Upper lobe of right lung (tissue), 1 donor: ENCODE measurements at regions of chr19 and their contacts with region 1.

Region 1: GRCh38 chr19:1039646-1040475 is at the start of gene ABCA7:
- DNase-seq: peak; percentile 100
- ATAC-seq: peak; percentile 95
- H3K4me3 ChIP-seq: peak within 1 kb of the TSS; percentile 60
- H3K27ac ChIP-seq: peak within 1 kb of the TSS; percentile 58
- H3K4me1 ChIP-seq: peaks cover 37% of the 10 kb centered on the region
- H3K27me3 ChIP-seq: no peaks in the 10 kb centered on the region
- CTCF ChIP-seq: no peak
- total RNA-seq, gene ABCA7: 51.0 TPM

Region 2: DNA sequence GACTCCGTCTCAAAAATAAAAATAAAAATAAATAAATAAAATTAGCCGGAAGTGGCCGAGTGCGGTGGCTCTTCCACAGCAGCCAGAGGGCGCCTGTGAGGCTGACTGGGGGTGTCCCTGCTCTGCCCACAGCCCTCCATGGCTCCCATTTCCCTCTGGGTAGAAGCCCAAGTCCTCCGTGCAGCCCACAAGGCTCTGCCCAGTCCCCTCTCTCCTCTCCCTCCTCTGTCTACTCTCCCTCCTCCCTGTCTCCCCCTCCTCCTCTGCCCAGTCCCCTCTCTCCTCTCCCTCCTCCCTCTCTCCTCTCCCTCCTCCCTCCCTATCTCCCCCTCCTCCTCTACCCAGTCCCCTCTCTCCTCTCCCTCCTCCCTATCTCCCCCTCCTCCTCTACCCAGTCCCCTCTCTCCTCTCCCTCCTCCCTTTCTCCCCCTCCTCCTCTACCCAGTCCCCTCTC is 268.5 kb before region 1 on chr19:
- intact Hi-C with region 1: no loop called
- DNase-seq: no peak
- ATAC-seq: peak; percentile 65
- H3K4me3 ChIP-seq: no peak overlapping the region
- H3K27ac ChIP-seq: no peak overlapping the region
- H3K4me1 ChIP-seq: no peaks in the 10 kb centered on the region
- H3K27me3 ChIP-seq: no peaks in the 10 kb centered on the region
- CTCF ChIP-seq: peak; percentile 62

Region 3: DNA sequence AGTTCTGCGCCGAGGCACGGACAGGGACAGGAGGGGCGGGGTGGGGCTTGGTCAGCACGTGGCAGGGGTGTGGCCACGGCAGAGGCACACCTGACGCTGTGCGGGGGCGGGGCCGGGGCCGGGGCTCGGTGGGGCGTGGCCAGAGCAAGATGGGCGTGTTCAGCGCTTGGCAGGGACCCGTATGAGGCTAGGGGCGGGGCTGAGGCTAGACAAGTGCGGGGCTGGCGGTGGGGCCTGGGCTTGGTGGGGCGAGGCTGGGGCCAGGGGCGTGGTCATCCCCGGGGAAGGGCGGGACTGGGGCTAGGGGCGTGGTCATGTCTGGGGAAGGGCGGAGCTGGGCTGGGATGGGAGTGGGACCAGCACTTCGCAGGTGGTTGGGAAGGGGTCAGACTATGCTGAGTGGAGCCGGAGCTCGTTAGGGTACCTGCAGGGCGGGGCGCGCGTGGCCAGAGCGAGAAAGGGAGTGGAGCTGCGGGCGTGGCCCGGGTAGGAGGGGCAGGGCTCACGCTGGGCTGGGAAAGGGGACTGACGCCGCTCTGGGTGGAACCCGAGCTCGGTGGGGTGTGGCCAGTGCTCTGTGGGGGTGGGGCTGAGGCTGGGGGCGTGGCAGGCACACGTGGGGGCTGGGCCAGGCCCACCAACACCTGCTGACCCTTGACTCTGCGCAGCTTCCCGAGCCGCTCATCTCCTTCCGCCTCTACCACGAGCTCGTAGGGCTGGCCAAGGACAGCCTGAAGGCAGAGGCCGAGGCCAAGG is 42.5 kb after region 1 on chr19:
- intact Hi-C with region 1: loop called (anchors 10 kb)
- DNase-seq: peak; percentile 96
- ATAC-seq: peak; percentile 90
- H3K4me3 ChIP-seq: peak overlapping the region; percentile 10
- H3K27ac ChIP-seq: no peak overlapping the region
- H3K4me1 ChIP-seq: peaks cover 21% of the 10 kb centered on the region
- H3K27me3 ChIP-seq: no peaks in the 10 kb centered on the region
- CTCF ChIP-seq: no peak